ENCODE measurements at regions of chr12 and their contacts with region 1.

Region 1: DNA sequence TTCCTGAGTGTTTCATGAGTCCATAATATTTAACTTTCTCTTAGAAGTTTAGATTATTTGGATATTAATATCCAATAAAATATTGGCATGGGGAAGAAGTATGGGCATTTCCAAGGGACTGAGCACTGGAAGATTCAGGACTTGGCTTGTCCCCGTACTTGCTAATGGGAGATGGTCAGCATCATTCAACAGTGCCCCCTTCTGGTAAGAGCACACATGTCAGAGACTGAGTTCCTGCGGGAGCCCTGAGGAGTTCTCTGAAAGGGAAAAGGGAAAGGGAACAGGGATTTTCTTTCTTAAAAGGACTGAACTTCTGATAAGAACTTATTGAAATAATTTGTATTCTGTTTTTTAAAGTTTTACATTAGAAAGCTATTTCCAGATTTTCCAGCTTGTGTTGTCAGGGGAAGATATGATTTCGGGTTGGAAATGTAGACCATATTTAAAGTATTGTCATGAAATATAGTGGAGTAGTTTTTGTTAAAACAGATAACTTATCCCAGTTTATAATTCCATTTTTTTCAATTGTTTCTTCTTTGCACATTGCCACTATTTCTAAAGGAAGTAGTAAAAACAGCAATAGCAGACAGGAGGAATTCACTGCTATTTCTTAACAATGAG is 59.8 kb upstream of the C12orf71 start:
- DNase-seq: peak; percentile 84
- ATAC-seq: peak; percentile 98
- H3K4me3 ChIP-seq: no peak overlapping the region
- H3K27ac ChIP-seq: no peak overlapping the region
- H3K4me1 ChIP-seq: peaks cover 3% of the 10 kb centered on the region; the same call in 1 of the 2 replicates
- H3K27me3 ChIP-seq: no peaks in the 10 kb centered on the region
- CTCF ChIP-seq: peak; percentile 85
- POLR2A ChIP-seq: no peak
- RAD21 ChIP-seq: peak; percentile 87

Region 2: GRCh38 chr12:26884765-26885576 is 257.2 kb before region 1 on chr12:
- CTCF ChIA-PET with region 1: no interaction called
- POLR2A ChIA-PET with region 1: no interaction called
- dilution Hi-C with region 1: no loop called
- in situ Hi-C with region 1: no loop called
- intact Hi-C with region 1: no loop called
- DNase-seq: peak; percentile 77
- ATAC-seq: peak; percentile 99
- H3K4me3 ChIP-seq: no peak overlapping the region
- H3K27ac ChIP-seq: no peak overlapping the region
- H3K4me1 ChIP-seq: no peaks in the 10 kb centered on the region
- H3K27me3 ChIP-seq: peaks cover 10% of the 10 kb centered on the region
- CTCF ChIP-seq: peak; percentile 93
- POLR2A ChIP-seq: no peak
- RAD21 ChIP-seq: peak; percentile 89

Region 3: GRCh38 chr12:27014085-27014858 is 127.9 kb before region 1 on chr12 and contains the start of gene TM7SF3:
- CTCF ChIA-PET with region 1: no interaction called
- POLR2A ChIA-PET with region 1: no interaction called
- dilution Hi-C with region 1: no loop called
- in situ Hi-C with region 1: no loop called
- intact Hi-C with region 1: loop called (anchors 1 kb)
- DNase-seq: peak; percentile 83
- ATAC-seq: peak; percentile 97
- H3K4me3 ChIP-seq: peak within 1 kb of the TSS; percentile 68
- H3K27ac ChIP-seq: peak within 1 kb of the TSS; percentile 75
- H3K4me1 ChIP-seq: no peaks in the 10 kb centered on the region
- H3K27me3 ChIP-seq: no peaks in the 10 kb centered on the region
- CTCF ChIP-seq: peak; percentile 98
- POLR2A ChIP-seq: no peak
- RAD21 ChIP-seq: peak; percentile 79
- total RNA-seq, gene TM7SF3: 45.3 and 46.6 TPM in 2 replicates

Region 4: GRCh38 chr12:27034607-27035293 is 107.5 kb before region 1 on chr12:
- CTCF ChIA-PET with region 1: no interaction called
- POLR2A ChIA-PET with region 1: no interaction called
- dilution Hi-C with region 1: no loop called
- in situ Hi-C with region 1: no loop called
- intact Hi-C with region 1: loop called (anchors 1 kb)
- DNase-seq: no peak
- ATAC-seq: no peak
- H3K4me3 ChIP-seq: no peak overlapping the region
- H3K27ac ChIP-seq: no peak overlapping the region
- H3K4me1 ChIP-seq: peaks cover 3% of the 10 kb centered on the region
- H3K27me3 ChIP-seq: no peaks in the 10 kb centered on the region
- CTCF ChIP-seq: no peak
- POLR2A ChIP-seq: no peak
- RAD21 ChIP-seq: no peak

Region 5: GRCh38 chr12:27193854-27194544 is 51.8 kb after region 1 on chr12:
- CTCF ChIA-PET with region 1: no interaction called
- POLR2A ChIA-PET with region 1: no interaction called
- dilution Hi-C with region 1: no loop called
- in situ Hi-C with region 1: no loop called
- intact Hi-C with region 1: loop called (anchors 2 kb)
- DNase-seq: peak; percentile 86
- ATAC-seq: peak; percentile 67
- H3K4me3 ChIP-seq: no peak overlapping the region
- H3K27ac ChIP-seq: peak overlapping the region; percentile 92
- H3K4me1 ChIP-seq: peaks cover 40% of the 10 kb centered on the region
- H3K27me3 ChIP-seq: no peaks in the 10 kb centered on the region
- CTCF ChIP-seq: no peak
- POLR2A ChIP-seq: peak; percentile 60; the same call in 1 of the 2 replicates
- RAD21 ChIP-seq: no peak

Region 6: GRCh38 chr12:27243804-27244683 is 101.8 kb after region 1 on chr12 and contains the start of gene STK38L:
- CTCF ChIA-PET with region 1: no interaction called
- POLR2A ChIA-PET with region 1: no interaction called
- dilution Hi-C with region 1: no loop called
- in situ Hi-C with region 1: no loop called
- intact Hi-C with region 1: loop called (anchors 2 kb)
- DNase-seq: peak; percentile 93
- ATAC-seq: peak; percentile 99
- H3K4me3 ChIP-seq: peak within 1 kb of the TSS; percentile 75
- H3K27ac ChIP-seq: peak within 1 kb of the TSS; percentile 81
- H3K4me1 ChIP-seq: peaks cover 2% of the 10 kb centered on the region; the same call in 1 of the 2 replicates
- H3K27me3 ChIP-seq: no peaks in the 10 kb centered on the region
- CTCF ChIP-seq: peak; percentile 49
- POLR2A ChIP-seq: peak; percentile 95
- RAD21 ChIP-seq: peak; percentile 58
- total RNA-seq, gene STK38L: 7.2 and 15.3 TPM in 2 replicates

Region 7: DNA sequence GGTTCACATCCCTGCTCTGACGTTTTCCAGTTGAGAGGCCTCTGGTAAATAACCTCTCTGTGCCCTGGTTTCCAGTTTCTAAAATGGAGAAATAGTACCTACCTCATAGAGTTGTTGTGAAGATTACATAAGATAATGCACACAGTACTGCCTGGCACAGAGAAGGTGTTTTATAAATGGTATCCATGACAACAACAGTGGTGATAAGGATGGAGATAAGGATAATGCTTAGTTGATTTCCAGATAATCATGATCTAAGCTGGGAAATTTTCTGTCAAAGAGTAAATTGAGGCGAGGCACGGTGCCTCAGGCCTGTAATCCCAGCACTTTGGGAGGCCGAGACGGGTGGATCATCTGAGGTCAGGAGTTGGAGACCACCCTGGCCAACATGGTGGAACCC is 139.3 kb after region 1 on chr12:
- CTCF ChIA-PET with region 1: no interaction called
- POLR2A ChIA-PET with region 1: interaction called, 17 read pairs
- dilution Hi-C with region 1: no loop called
- in situ Hi-C with region 1: no loop called
- intact Hi-C with region 1: no loop called
- DNase-seq: no peak
- ATAC-seq: no peak
- H3K4me3 ChIP-seq: no peak overlapping the region
- H3K27ac ChIP-seq: no peak overlapping the region
- H3K4me1 ChIP-seq: peaks cover 8% of the 10 kb centered on the region
- H3K27me3 ChIP-seq: no peaks in the 10 kb centered on the region
- CTCF ChIP-seq: no peak
- POLR2A ChIP-seq: no peak
- RAD21 ChIP-seq: no peak

Region 8: GRCh38 chr12:27305673-27306456 is 163.7 kb after region 1 on chr12:
- CTCF ChIA-PET with region 1: no interaction called
- POLR2A ChIA-PET with region 1: no interaction called
- dilution Hi-C with region 1: no loop called
- in situ Hi-C with region 1: no loop called
- intact Hi-C with region 1: loop called (anchors 2 kb)
- DNase-seq: peak; percentile 65
- ATAC-seq: peak; percentile 35; the same call in 1 of the 2 replicates
- H3K4me3 ChIP-seq: no peak overlapping the region
- H3K27ac ChIP-seq: no peak overlapping the region
- H3K4me1 ChIP-seq: peaks cover 4% of the 10 kb centered on the region
- H3K27me3 ChIP-seq: no peaks in the 10 kb centered on the region
- CTCF ChIP-seq: peak; percentile 64
- POLR2A ChIP-seq: no peak
- RAD21 ChIP-seq: peak; percentile 71

Region 9: GRCh38 chr12:27610374-27610773 is 468.2 kb after region 1 on chr12:
- CTCF ChIA-PET with region 1: no interaction called
- POLR2A ChIA-PET with region 1: no interaction called
- dilution Hi-C with region 1: no loop called
- in situ Hi-C with region 1: no loop called
- intact Hi-C with region 1: no loop called
- DNase-seq: peak; percentile 70
- ATAC-seq: peak; percentile 86
- H3K4me3 ChIP-seq: no peak overlapping the region
- H3K27ac ChIP-seq: peak overlapping the region; percentile 2; the same call in 1 of the 2 replicates
- H3K4me1 ChIP-seq: peaks cover 6% of the 10 kb centered on the region
- H3K27me3 ChIP-seq: no peaks in the 10 kb centered on the region
- CTCF ChIP-seq: no peak
- POLR2A ChIP-seq: no peak
- RAD21 ChIP-seq: no peak

Measured in IMR-90 (cell line).